MCF 10A (cell line): ENCODE measurements at regions of chr2 and their contacts with region 1.

Region 1: GRCh38 chr2:99881901-99882591 is 260.3 kb downstream of the AFF3 start:
- DNase-seq: peak; percentile 65
- H3K4me3 Mint-ChIP-seq: no peak overlapping the region
- H3K27ac Mint-ChIP-seq: peak overlapping the region; percentile 18
- H3K4me1 Mint-ChIP-seq: peaks cover 43% of the 10 kb centered on the region
- H3K27me3 Mint-ChIP-seq: no peaks in the 10 kb centered on the region
- CTCF ChIP-seq: no peak

Region 2: DNA sequence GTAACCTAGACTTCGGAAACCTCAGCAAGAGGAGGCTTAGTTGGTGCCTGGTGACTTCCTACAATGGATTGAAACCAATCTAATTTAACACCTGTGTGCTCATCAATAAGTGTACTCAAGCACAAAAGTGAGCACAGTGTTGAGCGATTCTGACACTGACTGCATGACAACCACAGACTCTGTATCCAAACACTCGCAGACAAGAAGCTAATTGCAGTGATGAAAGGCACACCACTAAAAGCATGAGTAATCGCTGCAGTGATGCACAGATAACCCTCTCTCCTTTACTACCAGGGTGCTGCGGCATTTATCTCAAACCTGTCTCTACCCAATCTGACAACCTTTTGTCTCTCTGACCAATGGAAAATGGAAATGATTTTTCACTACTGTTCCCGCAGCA is 92.2 kb after region 1 on chr2:
- CTCF ChIA-PET with region 1: interaction called, 3 read pairs
- POLR2A ChIA-PET with region 1: no interaction called
- intact Hi-C with region 1: loop called (anchors 10 kb)
- DNase-seq: peak; percentile 40
- H3K4me3 Mint-ChIP-seq: no peak overlapping the region
- H3K27ac Mint-ChIP-seq: no peak overlapping the region
- H3K4me1 Mint-ChIP-seq: peaks cover 38% of the 10 kb centered on the region
- H3K27me3 Mint-ChIP-seq: no peaks in the 10 kb centered on the region
- CTCF ChIP-seq: no peak

Region 3: DNA sequence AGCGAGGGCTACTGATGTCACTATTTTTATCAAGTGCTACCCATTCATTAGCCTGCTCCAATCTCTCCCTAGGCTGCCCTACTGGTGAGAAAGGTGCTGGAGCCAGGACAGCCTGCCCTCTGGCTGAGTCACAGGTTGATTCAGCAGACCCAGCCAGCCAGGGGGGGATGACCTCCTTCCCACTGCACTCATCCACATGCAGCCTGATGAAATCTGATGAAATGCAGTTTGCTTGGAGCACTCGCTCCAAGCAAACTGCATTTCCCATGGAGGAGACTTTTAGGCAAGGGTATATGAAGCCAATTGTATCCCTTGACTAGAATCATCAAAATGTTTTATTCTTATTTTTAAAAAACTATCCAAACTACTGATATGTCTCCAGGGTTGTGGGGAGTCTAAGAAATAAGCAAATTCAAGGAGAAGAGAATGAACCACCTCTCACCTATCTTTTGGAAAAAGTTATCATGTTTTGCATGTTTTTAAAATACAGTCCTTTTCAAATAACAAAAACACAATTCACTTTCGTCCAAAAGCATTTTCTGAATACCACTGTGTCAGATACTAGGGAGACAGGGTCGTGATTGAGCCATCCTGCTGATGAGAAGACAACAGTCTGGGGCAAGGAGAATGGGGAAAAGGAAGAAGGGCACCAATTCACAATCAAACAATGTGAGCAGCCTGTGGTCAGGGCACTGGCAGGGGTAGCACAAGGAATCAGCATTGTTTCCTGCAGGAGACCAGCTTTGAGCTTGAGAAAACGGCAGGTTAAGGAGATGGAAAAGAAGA is 132.0 kb after region 1 on chr2:
- CTCF ChIA-PET with region 1: no interaction called
- POLR2A ChIA-PET with region 1: no interaction called
- intact Hi-C with region 1: loop called (anchors 10 kb)
- DNase-seq: peak; percentile 88
- H3K4me3 Mint-ChIP-seq: no peak overlapping the region
- H3K27ac Mint-ChIP-seq: peak overlapping the region; percentile 84
- H3K4me1 Mint-ChIP-seq: peaks cover 20% of the 10 kb centered on the region
- H3K27me3 Mint-ChIP-seq: no peaks in the 10 kb centered on the region
- CTCF ChIP-seq: peak; percentile 22

Region 4: DNA sequence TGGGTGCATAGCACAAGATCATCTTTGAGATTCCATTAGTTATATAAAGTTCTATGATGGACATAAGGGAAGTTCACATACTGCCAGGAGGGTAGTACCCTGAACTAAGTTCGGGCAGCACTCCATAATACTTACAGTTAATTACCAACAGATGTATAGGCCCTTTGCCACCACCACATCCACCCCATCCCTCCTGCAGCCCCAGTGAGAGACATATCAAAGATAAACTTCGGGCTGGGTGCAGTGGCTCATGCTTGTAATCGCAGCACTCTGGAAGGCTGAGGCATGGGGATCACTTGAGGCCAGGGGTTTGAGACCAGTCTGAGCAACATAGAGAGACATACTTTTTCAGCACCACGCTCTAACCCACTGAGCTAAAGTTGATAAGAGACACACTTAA is 891.5 kb after region 1 on chr2:
- CTCF ChIA-PET with region 1: no interaction called
- POLR2A ChIA-PET with region 1: no interaction called
- intact Hi-C with region 1: no loop called
- DNase-seq: no peak
- H3K4me3 Mint-ChIP-seq: no peak overlapping the region
- H3K27ac Mint-ChIP-seq: no peak overlapping the region
- H3K4me1 Mint-ChIP-seq: no peaks in the 10 kb centered on the region
- H3K27me3 Mint-ChIP-seq: peaks cover 11% of the 10 kb centered on the region
- CTCF ChIP-seq: no peak